Left colon (tissue), 2 donors: ENCODE measurements at regions of chr10 and their contacts with region 1.

Region 1: DNA sequence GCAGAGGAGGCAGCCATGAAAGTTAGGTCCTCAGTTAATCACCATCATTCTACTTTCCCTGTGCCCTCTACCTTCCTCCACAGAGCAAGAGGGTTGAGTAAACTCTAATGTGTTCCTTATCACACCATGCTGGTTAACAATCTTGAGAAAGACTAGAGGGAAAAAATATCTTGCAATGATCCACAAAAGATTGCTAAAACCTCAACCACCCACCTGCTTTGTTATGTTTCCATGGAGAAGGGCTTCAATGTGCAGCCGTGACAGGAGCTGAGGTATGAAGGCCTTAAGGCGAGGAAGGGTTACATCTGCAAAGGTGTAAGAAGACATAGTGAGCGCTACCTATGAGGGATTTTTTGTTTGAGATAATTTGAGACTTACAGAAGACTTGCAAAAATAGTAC is 103.9 kb downstream of the IDE start:
- DNase-seq: no peak
- ATAC-seq: no peak

Region 2: DNA sequence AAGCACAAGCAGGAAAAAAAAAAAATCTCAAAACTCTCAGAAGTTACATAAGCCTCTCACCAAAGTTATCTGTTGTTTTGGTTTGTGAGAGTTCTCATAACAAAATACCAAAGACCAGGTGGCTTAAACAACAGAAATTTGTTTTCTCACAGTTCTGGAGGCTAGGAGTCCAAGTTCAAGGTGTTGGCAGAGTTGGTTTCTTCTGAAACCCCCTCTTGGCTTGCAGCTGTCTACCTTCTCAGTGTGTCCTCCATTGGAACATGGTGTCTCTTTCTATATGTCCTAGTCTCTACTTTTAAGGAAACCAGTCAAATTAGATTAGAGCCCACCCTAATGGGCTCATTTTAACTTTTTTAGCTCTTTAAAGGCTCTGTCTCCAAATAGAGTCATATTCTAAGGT is 627.0 kb before region 1 on chr10:
- intact Hi-C with region 1: loop called in 1 of 2 experiments (anchors 10 kb)
- DNase-seq: no peak
- ATAC-seq: no peak

Region 3: GRCh38 chr10:92222603-92223275 is 247.3 kb before region 1 on chr10:
- intact Hi-C with region 1: no loop called
- DNase-seq: no peak
- ATAC-seq: no peak